ENCODE measurements at regions of chr3 and their contacts with region 1.

Region 1: DNA sequence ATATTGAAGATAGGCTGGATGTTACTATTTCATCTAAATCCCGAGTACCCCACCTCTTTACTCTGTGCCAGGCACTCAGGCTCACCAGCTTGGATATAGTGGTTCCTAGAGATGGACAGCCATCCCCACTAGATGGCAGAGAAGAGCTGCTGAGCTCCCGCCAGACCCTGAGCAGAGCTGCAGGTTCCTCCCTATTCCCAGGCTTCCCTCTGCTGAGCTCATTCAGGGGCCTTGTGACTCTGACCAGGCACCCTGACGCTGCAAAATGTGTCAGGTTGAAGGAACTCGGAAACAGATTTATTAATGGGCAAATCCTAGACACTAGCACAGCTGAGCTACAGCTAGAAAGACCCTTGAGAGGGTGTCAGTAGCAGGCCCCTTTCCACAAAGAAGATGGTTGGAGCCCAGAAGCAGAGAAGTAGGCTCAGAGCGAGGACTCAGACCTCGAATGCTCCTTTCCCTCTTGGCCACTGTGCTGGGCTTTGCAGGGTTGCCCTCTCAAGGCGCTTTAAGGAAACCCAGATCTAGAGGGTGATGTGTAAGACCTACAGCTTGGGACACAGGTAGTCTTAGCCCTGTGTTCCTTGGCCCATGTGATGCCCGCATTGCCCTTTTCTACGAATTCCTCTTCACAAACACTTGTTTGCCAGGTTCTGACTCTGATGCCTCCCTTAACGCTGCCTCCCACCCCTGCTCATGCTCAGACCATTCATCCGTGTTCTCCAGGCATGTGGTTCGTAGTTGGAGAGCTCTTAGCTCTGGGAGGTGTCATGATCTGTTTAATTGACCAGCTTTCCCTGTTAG is 38.0 kb upstream of the RHO start:
- DNase-seq: peak in 4 of 5 donors; percentile 48 to 61 (median 56)
- H3K4me3 ChIP-seq: no peak overlapping the region
- H3K4me3 Mint-ChIP-seq: no peak overlapping the region
- H3K27ac ChIP-seq: no peak overlapping the region
- H3K27ac Mint-ChIP-seq: peak overlapping the region in 4 of 7 donors; percentile 30 to 55 (median 46)
- H3K4me1 ChIP-seq: no peaks in the 10 kb centered on the region
- H3K4me1 Mint-ChIP-seq: peaks cover 0 to 4% (median 0%) of the 10 kb centered on the region in 4 donors
- H3K27me3 ChIP-seq: no peaks in the 10 kb centered on the region
- H3K27me3 Mint-ChIP-seq: no peaks in the 10 kb centered on the region

Region 2: DNA sequence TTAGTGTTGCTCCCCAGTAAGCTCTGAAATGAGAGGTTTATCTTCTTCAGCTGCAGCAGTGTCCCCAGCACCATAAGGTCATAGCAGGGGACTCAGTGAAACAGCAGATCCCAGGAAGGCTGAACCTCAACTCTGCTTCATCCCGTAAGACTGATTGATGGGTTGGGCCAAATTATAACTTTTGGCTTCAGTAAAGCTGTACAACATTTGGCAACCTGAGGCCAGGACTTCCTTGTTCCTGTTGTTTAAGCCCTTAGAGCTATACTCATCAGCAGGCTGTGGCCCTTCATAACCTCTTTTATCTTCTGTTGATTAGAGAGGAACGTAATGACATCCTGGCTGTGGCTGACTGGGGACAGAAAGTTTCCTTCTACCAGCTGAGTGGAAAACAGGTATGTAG is 21.4 kb before region 1 on chr3:
- CTCF ChIA-PET with region 1: interaction called, 16 read pairs
- POLR2A ChIA-PET with region 1: no interaction called
- intact Hi-C with region 1: no loop called
- DNase-seq: peak in 3 of 5 donors; percentile 7 to 28 (median 23)
- H3K4me3 ChIP-seq: no peak overlapping the region
- H3K4me3 Mint-ChIP-seq: no peak overlapping the region
- H3K27ac ChIP-seq: no peak overlapping the region
- H3K27ac Mint-ChIP-seq: peak overlapping the region in 6 of 7 donors; percentile 18 to 77 (median 39)
- H3K4me1 ChIP-seq: peaks cover 13% of the 10 kb centered on the region
- H3K4me1 Mint-ChIP-seq: peaks cover 0 to 14% (median 8%) of the 10 kb centered on the region in 4 donors
- H3K27me3 ChIP-seq: no peaks in the 10 kb centered on the region
- H3K27me3 Mint-ChIP-seq: no peaks in the 10 kb centered on the region

Region 3: GRCh38 chr3:129576514-129577352 is 86.3 kb after region 1 on chr3:
- CTCF ChIA-PET with region 1: interaction called, 13 read pairs
- POLR2A ChIA-PET with region 1: interaction called, 15 read pairs
- intact Hi-C with region 1: no loop called
- DNase-seq: peak; percentile 84 to 90 (median 89)
- H3K4me3 ChIP-seq: peak overlapping the region in 1 of 2 donors; percentile 12
- H3K4me3 Mint-ChIP-seq: peak overlapping the region in 7 of 8 donors; percentile 53 to 79 (median 71)
- H3K27ac ChIP-seq: peak overlapping the region; percentile 67
- H3K27ac Mint-ChIP-seq: peak overlapping the region; percentile 90 to 98 (median 98)
- H3K4me1 ChIP-seq: peaks cover 54% of the 10 kb centered on the region
- H3K4me1 Mint-ChIP-seq: peaks cover 17 to 58% (median 39%) of the 10 kb centered on the region in 4 donors
- H3K27me3 ChIP-seq: no peaks in the 10 kb centered on the region
- H3K27me3 Mint-ChIP-seq: no peaks in the 10 kb centered on the region

Region 4: DNA sequence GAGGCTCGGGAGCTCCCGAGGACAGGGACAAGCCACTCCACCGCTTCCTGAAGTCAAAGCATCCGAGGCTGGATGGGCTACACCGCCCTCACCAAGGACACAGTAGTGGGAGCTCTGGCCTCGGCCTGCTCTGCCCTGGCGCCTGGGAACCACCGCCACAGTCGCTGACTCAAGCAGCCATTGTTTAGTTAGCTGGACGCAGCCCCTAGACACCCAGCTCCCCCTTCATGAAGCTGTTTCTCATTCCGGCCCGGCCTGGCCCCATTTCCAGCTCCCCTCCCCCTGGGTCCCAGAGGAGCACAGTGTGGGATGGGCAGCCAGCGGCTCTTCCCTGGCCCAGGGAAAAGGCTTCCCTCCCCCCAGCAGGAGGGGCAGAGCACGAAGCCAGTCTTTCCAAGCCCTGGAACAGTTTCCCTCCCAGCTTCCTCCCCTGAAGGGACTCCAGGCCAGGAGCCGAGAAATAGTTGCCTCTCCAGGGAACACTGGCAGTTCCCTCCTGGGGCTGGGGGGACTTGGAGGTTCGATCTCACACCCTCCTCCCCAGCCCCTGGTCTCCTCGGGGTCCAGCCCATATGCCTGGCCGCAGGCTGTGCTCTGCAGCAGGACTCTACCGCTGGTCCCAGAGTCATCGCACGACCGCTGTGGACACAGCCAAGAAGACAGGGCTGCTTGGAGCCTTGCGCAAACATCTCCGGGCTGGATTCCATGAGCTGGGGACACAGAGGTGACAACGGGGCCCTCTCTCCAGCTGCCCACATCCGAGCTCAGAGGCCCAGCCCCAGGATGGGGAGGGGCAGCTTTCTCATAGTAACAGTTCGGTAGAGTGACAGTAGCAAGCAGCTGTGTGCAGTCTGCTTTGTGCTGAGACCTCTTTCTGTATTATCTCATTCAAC is 106.0 kb after region 1 on chr3:
- CTCF ChIA-PET with region 1: interaction called, 23 read pairs
- POLR2A ChIA-PET with region 1: interaction called, 3 read pairs
- intact Hi-C with region 1: no loop called
- DNase-seq: no peak
- H3K4me3 ChIP-seq: no peak overlapping the region
- H3K4me3 Mint-ChIP-seq: peak overlapping the region in 1 of 8 donors; percentile 26
- H3K27ac ChIP-seq: no peak overlapping the region
- H3K27ac Mint-ChIP-seq: peak overlapping the region in 1 of 7 donors; percentile 29
- H3K4me1 ChIP-seq: peaks cover 27% of the 10 kb centered on the region
- H3K4me1 Mint-ChIP-seq: peaks cover 19 to 60% (median 41%) of the 10 kb centered on the region in 4 donors
- H3K27me3 ChIP-seq: no peaks in the 10 kb centered on the region
- H3K27me3 Mint-ChIP-seq: no peaks in the 10 kb centered on the region

Region 5: GRCh38 chr3:129934234-129935123 is 444.0 kb after region 1 on chr3:
- CTCF ChIA-PET with region 1: interaction called, 22 read pairs
- POLR2A ChIA-PET with region 1: no interaction called
- intact Hi-C with region 1: loop called (anchors 1 kb)
- DNase-seq: peak in 4 of 5 donors; percentile 16 to 27 (median 24)
- H3K4me3 ChIP-seq: no peak overlapping the region
- H3K4me3 Mint-ChIP-seq: peak overlapping the region in 5 of 8 donors; percentile 18 to 50 (median 22)
- H3K27ac ChIP-seq: no peak overlapping the region
- H3K27ac Mint-ChIP-seq: peak overlapping the region in 1 of 7 donors; percentile 20
- H3K4me1 ChIP-seq: no peaks in the 10 kb centered on the region
- H3K4me1 Mint-ChIP-seq: peaks cover 9 to 20% (median 10%) of the 10 kb centered on the region in 4 donors
- H3K27me3 ChIP-seq: no peaks in the 10 kb centered on the region
- H3K27me3 Mint-ChIP-seq: peaks cover 2 to 5% of the 10 kb centered on the region in 2 donors

Measured in CD4-positive, alpha-beta memory T cell (primary cell).